ENCODE measurements at regions of chr18 and their contacts with region 1.

Region 1: GRCh38 chr18:6397931-6398566 is 16.7 kb downstream of the L3MBTL4 start:
- DNase-seq: no peak
- ATAC-seq: no peak
- H3K4me3 ChIP-seq: no peak overlapping the region
- H3K4me3 Mint-ChIP-seq: no peak overlapping the region
- H3K27ac ChIP-seq: no peak overlapping the region
- H3K27ac Mint-ChIP-seq: no peak overlapping the region
- H3K4me1 ChIP-seq: no peaks in the 10 kb centered on the region
- H3K4me1 Mint-ChIP-seq: no peaks in the 10 kb centered on the region
- H3K27me3 ChIP-seq: no peaks in the 10 kb centered on the region
- H3K27me3 Mint-ChIP-seq: no peaks in the 10 kb centered on the region
- CTCF ChIP-seq: no peak

Region 2: DNA sequence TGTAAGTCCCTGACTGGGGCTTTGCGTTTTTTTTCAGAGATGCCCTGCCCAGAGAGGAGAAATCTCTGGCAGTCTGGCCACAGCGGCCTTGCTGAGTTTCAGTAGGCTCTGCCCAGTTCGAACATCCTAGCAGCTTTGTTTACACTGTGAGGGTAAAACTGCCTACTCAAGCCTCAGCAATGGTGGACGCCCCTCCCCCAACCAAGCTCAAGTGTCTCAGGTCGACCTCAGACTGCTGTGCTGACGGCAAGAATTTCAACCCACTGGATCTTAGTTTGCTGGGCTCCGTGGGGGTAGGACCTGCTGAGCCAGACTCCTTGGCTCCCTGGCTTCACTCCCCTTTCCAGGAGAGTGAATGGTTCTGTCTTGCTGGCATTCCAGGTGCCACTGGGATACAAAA is 15.1 kb before region 1 on chr18:
- CTCF ChIA-PET with region 1: no interaction called
- POLR2A ChIA-PET with region 1: no interaction called
- intact Hi-C with region 1: no loop called
- DNase-seq: no peak
- ATAC-seq: no peak
- H3K4me3 ChIP-seq: no peak overlapping the region
- H3K4me3 Mint-ChIP-seq: no peak overlapping the region
- H3K27ac ChIP-seq: no peak overlapping the region
- H3K27ac Mint-ChIP-seq: no peak overlapping the region
- H3K4me1 ChIP-seq: no peaks in the 10 kb centered on the region
- H3K4me1 Mint-ChIP-seq: no peaks in the 10 kb centered on the region
- H3K27me3 ChIP-seq: no peaks in the 10 kb centered on the region
- H3K27me3 Mint-ChIP-seq: no peaks in the 10 kb centered on the region
- CTCF ChIP-seq: no peak

Region 3: DNA sequence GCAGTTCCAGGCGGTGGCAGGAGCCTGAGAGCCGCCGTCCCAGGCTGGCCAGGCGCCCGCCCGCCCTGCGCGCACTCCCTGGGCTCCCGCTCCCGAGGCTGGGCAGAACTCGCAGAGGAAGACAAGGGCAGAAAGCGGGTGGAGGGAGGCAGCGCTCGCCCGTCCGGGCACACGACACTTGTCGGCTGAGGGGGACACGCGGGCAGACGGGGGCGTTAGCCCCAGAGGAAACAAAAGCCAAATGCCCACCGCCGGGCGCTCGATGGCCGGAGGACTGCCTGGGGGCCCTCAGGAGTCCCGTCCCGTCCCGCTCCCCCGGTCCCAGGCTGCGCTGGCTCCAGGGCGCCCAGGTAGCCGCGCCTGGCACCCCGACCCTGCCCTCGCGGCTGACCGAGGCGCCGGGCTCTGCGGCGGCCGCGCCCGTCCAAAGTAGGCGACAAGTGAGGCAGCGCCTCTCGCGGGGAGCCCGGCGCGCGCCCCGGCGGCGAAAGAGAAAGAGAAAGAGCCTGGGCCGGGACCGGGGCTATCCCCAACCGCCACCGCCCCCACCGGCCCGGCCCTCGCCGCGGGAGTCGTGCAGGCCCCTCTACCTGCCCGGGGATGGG is 16.2 kb after region 1 on chr18:
- CTCF ChIA-PET with region 1: no interaction called
- POLR2A ChIA-PET with region 1: no interaction called
- intact Hi-C with region 1: loop called in 1 of 2 experiments (anchors 2 kb)
- DNase-seq: peak in 5 of 9 experiments; percentile 9 to 55 (median 35)
- ATAC-seq: no peak
- H3K4me3 ChIP-seq: peak overlapping the region in 1 of 2 experiments; percentile 41
- H3K4me3 Mint-ChIP-seq: no peak overlapping the region
- H3K27ac ChIP-seq: no peak overlapping the region
- H3K27ac Mint-ChIP-seq: no peak overlapping the region
- H3K4me1 ChIP-seq: no peaks in the 10 kb centered on the region
- H3K4me1 Mint-ChIP-seq: peaks cover 9% of the 10 kb centered on the region
- H3K27me3 ChIP-seq: no peaks in the 10 kb centered on the region
- H3K27me3 Mint-ChIP-seq: peaks cover 22% of the 10 kb centered on the region
- CTCF ChIP-seq: no peak

Measured in CD8-positive, alpha-beta T cell (primary cell).